ENCODE measurements at regions of chr11 and their contacts with region 1.

Region 1: GRCh38 chr11:66051766-66052663 is at the start of gene SF3B2:
- DNase-seq: peak; percentile 94
- H3K27ac ChIP-seq: peak within 1 kb of the TSS; percentile 92
- CTCF ChIP-seq: no peak

Region 2: DNA sequence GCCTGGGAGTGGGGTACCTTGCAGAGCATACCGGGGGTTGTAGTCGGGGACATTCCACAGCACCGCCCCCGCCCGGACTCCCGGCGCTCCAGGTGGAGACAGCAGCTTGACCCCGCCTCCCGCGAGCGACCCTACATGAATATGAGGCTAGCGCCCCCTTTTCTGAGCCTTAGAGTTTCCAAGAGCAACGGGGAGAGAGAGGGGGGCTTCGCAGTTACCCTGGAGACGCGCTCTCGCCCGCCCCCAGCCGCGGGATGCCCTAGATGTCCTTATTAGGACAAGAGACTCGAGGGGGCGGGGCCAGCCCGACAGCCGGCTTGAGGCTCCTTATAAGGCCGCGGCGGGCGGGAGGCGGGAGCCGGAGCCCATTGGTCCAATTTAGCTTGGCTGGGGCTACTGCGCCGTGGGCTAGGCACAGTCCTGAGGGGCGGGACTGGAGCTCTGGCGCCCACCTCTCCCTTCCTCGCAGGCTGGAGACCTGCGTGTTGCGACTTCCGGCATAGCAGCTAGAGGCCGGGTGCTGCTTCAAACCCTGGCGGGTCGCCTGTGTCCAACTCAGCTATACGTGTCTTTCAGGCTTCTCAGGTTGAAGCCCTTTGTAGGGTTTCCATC is 192.7 kb before region 1 on chr11:
- CTCF ChIA-PET with region 1: no interaction called
- POLR2A ChIA-PET with region 1: no interaction called
- DNase-seq: peak; percentile 93
- H3K27ac ChIP-seq: peak overlapping the region; percentile 98
- CTCF ChIP-seq: no peak

Region 3: GRCh38 chr11:66015454-66015881 is 36.5 kb before region 1 on chr11:
- CTCF ChIA-PET with region 1: interaction called, 3 read pairs
- POLR2A ChIA-PET with region 1: interaction called, 13 read pairs
- DNase-seq: no peak
- H3K27ac ChIP-seq: peak overlapping the region; percentile 78
- CTCF ChIP-seq: no peak

Region 4: GRCh38 chr11:66068154-66068821 is 16.3 kb after region 1 on chr11:
- CTCF ChIA-PET with region 1: interaction called, 32 read pairs
- POLR2A ChIA-PET with region 1: interaction called, 4 read pairs
- DNase-seq: peak; percentile 62
- H3K27ac ChIP-seq: peak overlapping the region; percentile 95
- CTCF ChIP-seq: peak; percentile 89

Region 5: DNA sequence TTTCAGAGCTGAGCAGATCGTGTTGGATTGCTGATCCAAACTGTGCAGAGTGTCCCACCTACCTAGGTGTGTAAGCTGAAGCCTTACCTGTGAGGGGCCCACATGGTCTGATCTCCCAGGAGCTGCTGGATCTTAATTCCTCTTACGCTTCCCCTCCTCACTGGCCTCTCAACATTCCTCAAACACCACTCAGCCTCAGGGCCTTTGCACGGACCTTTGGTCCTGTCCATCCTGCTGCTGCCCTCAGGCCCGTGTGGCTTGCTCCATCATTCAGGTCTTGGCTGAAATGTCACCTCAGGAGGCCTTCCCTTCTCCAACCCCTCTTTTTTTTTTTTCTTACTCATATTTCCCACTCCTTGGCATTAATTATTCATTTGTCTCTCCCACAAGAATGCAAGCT is 195.3 kb after region 1 on chr11:
- CTCF ChIA-PET with region 1: no interaction called
- POLR2A ChIA-PET with region 1: no interaction called
- DNase-seq: no peak
- H3K27ac ChIP-seq: no peak overlapping the region
- CTCF ChIP-seq: no peak